ENCODE measurements at regions of chr16 and their contacts with region 1.

Region 1: DNA sequence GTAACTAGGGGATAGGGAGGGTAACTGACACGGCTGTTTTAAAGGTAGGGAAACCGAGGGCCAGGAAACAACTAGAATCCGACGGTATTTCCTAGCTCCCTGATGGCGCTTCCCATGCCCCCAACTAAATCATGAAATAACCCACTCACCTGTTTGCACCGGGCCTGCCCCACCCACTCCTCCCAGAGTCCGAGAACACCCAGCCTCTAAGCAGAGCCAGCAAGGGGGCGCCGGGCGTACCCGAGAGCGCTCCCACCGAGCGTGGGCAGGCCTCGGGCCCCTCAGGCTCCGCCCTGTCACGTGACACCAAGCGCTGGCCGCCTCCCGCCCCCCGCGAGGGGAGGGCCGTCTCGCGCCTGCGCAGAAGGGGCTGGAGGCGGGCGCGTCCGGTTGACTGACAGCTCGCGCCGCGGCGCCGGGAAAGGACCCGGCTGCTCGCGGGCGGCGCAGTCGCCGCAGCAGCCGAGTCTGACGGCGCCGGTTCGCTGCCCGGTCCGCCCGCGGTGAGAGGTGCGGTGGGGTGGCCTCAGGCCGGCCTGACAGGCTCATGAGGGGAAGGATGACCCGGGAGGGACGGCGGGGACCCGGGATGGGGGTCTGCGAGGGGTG is at the start of gene KIAA0513:
- DNase-seq: peak; percentile 100
- ATAC-seq: peak; percentile 76
- H3K4me3 Mint-ChIP-seq: peak within 1 kb of the TSS; percentile 90
- H3K27ac Mint-ChIP-seq: peak within 1 kb of the TSS; percentile 93
- H3K4me1 Mint-ChIP-seq: peaks cover 29% of the 10 kb centered on the region
- H3K27me3 Mint-ChIP-seq: no peaks in the 10 kb centered on the region
- total RNA-seq, gene KIAA0513: 11.6 to 13.9 TPM

Region 2: DNA sequence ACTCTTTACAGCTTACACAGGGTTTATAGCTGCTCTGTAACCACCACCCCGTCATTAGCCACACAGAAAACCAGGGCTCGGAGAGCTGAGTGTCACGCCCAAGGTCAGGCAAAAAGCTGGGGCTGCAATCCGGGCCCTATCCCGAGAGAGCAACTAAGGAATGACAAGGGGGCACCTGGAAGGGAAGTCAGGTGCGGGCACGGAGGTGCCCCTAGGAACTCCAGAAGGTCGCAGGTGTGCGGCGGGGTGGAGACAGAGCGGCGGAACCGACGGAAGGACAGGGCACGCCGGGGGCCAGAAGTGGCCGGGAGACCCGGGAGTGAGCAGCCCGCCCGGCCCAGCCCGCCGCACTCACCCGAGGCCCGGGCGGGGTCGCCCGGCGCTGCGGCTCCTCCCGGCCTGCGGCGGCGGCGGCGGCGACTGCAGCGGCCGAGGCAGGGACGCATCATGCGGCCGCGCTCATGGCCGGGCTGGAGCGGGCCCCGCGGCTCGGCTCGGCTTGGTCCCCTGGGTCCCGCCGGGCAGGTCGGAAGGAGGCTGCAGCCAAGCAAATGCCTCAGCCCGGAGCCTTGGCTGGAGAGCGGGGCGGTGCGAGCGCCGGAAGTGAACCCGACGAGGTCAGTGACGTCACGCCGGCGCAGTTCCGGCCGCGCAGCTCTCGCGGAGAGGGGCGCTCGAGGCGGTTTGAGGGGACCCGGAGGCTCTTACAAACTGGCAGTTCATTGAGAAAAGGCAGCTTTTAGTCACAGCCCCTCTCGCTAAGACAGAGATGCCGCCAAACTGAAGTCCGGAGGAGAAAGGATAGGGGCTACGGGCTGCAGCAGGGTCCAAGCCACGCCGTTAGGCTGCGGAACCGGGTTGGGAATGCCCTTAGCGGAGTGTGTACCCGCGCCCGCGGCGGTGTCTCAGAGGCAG is 16.3 kb before region 1 on chr16 and contains the start of gene ZDHHC7:
- POLR2A ChIA-PET with region 1: interaction called, 38 read pairs
- DNase-seq: peak; percentile 90
- ATAC-seq: peak; percentile 91
- H3K4me3 Mint-ChIP-seq: peak within 1 kb of the TSS; percentile 95
- H3K27ac Mint-ChIP-seq: peak within 1 kb of the TSS; percentile 97
- H3K4me1 Mint-ChIP-seq: peaks cover 17% of the 10 kb centered on the region
- H3K27me3 Mint-ChIP-seq: no peaks in the 10 kb centered on the region
- total RNA-seq, gene ZDHHC7: 30.5 to 33.7 TPM

Region 3: DNA sequence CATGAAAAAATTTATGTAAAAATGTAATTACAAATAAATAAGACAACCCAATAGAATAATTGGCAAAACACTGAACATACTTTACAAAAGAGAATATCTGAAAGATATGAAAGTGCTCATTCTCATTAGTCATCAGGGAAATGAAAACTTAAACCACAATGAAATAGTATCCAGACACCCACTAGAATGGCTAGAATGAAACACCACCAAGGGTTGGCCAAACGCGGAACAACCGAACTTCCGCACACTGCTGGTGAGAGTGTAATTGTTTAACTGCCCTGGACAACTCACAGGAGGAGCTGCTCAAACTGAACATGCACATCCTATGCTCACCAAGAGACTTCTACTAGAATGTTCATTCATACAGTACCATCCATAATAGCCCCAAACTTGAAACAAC is 10.3 kb before region 1 on chr16:
- POLR2A ChIA-PET with region 1: interaction called, 38 read pairs
- DNase-seq: no peak
- ATAC-seq: no peak
- H3K4me3 Mint-ChIP-seq: no peak overlapping the region
- H3K27ac Mint-ChIP-seq: no peak overlapping the region
- H3K4me1 Mint-ChIP-seq: peaks cover 10% of the 10 kb centered on the region
- H3K27me3 Mint-ChIP-seq: peaks cover 13% of the 10 kb centered on the region

Region 4: DNA sequence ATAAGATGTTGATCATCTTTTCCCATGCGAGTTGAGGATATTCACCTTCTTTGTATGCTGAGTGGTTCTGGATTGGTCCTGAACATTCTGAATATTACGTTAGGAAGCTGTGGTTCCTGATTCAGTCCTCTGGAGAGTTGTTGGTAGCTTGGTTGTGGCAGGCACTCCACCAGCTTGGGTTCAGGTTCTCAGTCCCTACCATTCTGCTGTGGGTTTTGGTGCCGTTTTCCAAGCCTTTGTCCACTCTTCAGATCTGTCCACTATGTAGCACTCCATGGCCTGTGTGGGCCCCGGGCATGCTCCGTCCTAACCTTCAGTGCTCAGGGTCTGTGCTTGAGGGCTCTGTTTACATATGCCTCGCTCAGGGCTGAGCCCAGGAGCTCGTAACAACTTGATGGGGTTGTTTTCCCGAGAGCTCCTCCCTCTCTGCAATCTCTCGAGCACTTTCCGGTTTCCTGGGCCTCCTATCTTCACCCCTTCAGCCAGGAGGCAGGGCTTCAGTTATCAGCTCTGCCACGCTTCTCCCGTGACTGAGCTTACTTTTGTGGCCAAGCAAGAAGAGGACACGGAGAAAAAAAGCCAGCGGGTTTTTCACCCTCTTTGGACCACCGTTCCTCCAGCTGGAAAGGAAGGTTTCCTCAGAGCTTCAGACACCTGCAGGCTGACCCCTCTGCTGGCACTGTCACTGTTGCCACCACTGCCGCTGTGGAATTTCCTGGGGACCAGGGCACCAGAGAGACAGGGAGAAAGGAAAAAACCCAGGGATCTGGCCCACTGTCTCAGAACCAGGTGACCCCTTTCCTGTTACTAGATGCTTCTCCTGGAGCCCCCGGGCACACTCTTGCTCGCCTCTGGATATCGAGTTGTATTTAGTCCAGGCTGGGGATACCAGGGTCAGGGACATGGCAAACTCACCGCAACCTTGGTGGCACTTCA is 19.7 kb after region 1 on chr16:
- POLR2A ChIA-PET with region 1: interaction called, 12 read pairs
- DNase-seq: no peak
- ATAC-seq: peak; percentile 83
- H3K4me3 Mint-ChIP-seq: peak overlapping the region; percentile 58
- H3K27ac Mint-ChIP-seq: peak overlapping the region; percentile 75
- H3K4me1 Mint-ChIP-seq: peaks cover 10% of the 10 kb centered on the region
- H3K27me3 Mint-ChIP-seq: no peaks in the 10 kb centered on the region

Region 5: GRCh38 chr16:85055503-85056210 is 28.2 kb after region 1 on chr16:
- POLR2A ChIA-PET with region 1: interaction called, 34 read pairs
- DNase-seq: peak; percentile 69
- ATAC-seq: peak; percentile 97
- H3K4me3 Mint-ChIP-seq: peak overlapping the region; percentile 82
- H3K27ac Mint-ChIP-seq: peak overlapping the region; percentile 98
- H3K4me1 Mint-ChIP-seq: peaks cover 31% of the 10 kb centered on the region
- H3K27me3 Mint-ChIP-seq: no peaks in the 10 kb centered on the region

Measured in activated naive CD8-positive, alpha-beta T cell treated with anti-CD3 and anti-CD28 coated beads, Interleukin-2, amount 10 ng/mL, durations not matched to agents 7 days and 5 days (primary cell).